ENCODE measurements at regions of chr11 and their contacts with region 1.

Region 1: GRCh38 chr11:19240420-19241259 is at the start of gene E2F8:
- DNase-seq: peak; percentile 92
- H3K4me3 Mint-ChIP-seq: peak within 1 kb of the TSS; percentile 96
- H3K27ac Mint-ChIP-seq: peak within 1 kb of the TSS; percentile 89
- H3K4me1 Mint-ChIP-seq: peaks cover 46% of the 10 kb centered on the region
- H3K27me3 Mint-ChIP-seq: peaks cover 15% of the 10 kb centered on the region
- total RNA-seq, gene E2F8: 25.6 and 28.2 TPM in 2 replicates

Region 2: DNA sequence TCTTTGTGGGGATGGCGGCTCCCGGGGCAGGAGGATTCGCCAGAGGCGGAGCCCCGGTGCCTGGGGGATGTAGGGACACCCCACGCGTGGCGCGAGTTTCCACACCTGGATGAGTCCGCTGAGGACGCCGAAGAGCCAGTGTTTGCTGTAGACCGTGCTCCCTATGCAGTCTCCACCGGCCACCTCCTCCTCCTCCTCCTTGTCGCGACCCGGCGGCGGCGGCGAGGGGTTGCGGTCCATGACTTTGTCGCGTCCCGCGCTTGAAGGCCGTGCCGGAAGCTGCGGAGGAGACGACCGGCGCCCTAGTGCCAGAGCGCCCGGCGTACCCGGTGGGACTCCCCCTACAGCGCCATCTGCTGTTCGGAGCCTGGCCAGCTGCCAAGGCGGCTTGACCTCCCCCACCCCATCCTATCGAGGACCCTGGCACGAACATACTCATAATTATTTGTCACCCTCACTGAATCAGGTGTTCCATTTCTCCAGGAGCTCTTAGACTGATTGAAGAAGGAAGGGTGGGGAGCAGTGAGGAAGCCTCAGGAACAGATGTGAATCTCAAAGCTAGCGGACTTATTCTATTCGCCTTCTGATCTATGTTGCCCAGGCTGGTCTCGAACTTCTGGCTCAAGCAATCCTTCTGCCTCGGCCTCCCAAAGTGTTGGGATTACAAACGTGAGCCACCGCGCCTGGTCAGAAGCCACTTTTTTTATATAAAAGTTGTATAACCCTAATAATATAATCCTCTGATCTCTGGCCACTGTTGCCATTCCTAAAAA is 1134.7 kb before region 1 on chr11 and contains the start of gene SAAL1:
- intact Hi-C with region 1: loop called (anchors 5 kb)
- DNase-seq: peak; percentile 86
- H3K4me3 Mint-ChIP-seq: peak within 1 kb of the TSS; percentile 94
- H3K27ac Mint-ChIP-seq: peak within 1 kb of the TSS; percentile 88
- H3K4me1 Mint-ChIP-seq: peaks cover 33% of the 10 kb centered on the region
- H3K27me3 Mint-ChIP-seq: peaks cover 3% of the 10 kb centered on the region
- total RNA-seq, gene SAAL1: 42.5 and 42.9 TPM in 2 replicates

Region 3: GRCh38 chr11:18395735-18396504 is 844.7 kb before region 1 on chr11:
- intact Hi-C with region 1: loop called (anchors 10 kb)
- DNase-seq: peak; percentile 96
- H3K4me3 Mint-ChIP-seq: peak overlapping the region; percentile 99
- H3K27ac Mint-ChIP-seq: peak overlapping the region; percentile 98
- H3K4me1 Mint-ChIP-seq: peaks cover 67% of the 10 kb centered on the region
- H3K27me3 Mint-ChIP-seq: no peaks in the 10 kb centered on the region

Region 4: DNA sequence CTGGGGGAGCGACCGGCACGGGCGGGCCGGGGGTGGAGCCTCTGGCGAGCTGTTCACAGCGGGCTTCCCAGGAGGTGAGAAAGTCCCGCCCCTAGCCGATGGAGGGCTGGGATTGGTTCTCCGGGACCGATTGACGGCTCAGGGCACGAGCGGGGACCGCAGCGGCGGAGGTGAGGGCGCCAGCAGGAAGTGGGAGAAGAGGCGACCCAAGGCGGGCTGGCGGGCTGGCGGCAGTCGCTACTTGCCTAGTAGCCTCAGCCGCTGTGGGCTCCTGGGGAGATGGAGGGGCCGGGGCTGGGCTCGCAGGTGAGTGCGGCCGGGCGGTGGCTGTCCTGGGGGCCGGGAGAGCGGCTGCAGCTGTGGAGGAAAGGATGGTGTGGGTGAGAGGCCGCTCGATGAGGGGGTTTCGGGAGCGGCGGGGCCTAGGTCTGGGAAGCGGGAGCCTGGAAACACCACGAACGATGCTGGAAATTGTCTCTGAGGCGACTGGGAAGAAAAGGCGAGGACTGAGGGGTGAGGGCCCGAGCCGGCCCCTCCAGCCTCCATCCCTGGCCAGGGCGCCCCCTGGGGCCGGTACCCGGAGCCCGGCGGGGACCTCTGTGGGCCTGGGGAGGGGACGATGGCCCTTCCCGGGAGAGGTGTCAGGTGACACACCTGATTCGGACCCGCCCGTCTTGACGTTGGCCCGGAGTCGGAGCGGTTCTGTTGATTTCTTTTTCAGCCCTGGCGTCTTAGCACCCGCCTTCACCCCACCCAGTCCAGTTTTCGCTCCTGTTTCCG is 123.5 kb before region 1 on chr11 and contains the start of gene ZDHHC13:
- intact Hi-C with region 1: loop called (anchors 1 kb)
- DNase-seq: peak; percentile 94
- H3K4me3 Mint-ChIP-seq: peak within 1 kb of the TSS; percentile 93
- H3K27ac Mint-ChIP-seq: peak within 1 kb of the TSS; percentile 84
- H3K4me1 Mint-ChIP-seq: peaks cover 54% of the 10 kb centered on the region
- H3K27me3 Mint-ChIP-seq: peaks cover 12% of the 10 kb centered on the region
- total RNA-seq, gene ZDHHC13: 25.0 and 28.9 TPM in 2 replicates

Region 5: DNA sequence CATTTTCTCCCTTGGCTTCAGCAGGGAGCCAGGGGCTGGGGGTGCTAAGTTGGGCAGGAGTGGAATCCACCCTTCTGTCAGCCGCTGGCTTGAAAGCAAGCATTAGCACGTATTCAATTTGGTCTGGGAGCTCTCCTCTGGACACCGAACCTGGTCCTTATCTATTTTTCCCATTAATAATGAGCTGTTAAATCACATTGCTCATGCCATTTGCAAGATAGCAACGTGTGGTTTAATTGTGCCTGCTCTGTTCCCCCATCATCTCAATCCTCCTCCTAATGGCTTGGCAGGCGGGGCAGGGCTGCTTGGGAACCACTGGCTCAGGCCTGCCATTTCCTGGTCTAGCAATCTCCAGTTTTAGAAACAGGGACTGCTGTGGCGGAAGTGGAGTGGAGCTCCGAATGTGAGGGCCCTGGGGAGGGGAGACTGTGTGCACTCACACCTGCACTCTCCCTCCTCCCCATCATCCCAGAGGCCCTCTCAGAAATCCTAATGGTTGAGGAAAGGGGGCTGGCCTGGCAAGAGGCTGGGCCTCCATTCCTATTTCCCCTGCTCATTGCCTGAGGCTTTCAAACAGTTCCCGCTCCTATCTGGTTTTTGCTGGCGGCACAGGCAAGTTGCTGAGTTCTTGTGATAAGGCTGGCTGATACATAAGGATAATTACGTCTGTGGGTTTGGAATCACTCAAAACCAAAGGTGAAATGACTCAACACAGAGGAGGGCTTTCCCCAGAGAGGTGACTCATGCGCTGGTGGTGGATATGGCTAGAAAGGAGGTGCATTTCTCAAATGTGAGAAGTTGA is 201.3 kb after region 1 on chr11:
- intact Hi-C with region 1: loop called (anchors 5 kb)
- DNase-seq: peak; percentile 41
- H3K4me3 Mint-ChIP-seq: no peak overlapping the region
- H3K27ac Mint-ChIP-seq: peak overlapping the region; percentile 18
- H3K4me1 Mint-ChIP-seq: peaks cover 24% of the 10 kb centered on the region
- H3K27me3 Mint-ChIP-seq: peaks cover 46% of the 10 kb centered on the region

Region 6: DNA sequence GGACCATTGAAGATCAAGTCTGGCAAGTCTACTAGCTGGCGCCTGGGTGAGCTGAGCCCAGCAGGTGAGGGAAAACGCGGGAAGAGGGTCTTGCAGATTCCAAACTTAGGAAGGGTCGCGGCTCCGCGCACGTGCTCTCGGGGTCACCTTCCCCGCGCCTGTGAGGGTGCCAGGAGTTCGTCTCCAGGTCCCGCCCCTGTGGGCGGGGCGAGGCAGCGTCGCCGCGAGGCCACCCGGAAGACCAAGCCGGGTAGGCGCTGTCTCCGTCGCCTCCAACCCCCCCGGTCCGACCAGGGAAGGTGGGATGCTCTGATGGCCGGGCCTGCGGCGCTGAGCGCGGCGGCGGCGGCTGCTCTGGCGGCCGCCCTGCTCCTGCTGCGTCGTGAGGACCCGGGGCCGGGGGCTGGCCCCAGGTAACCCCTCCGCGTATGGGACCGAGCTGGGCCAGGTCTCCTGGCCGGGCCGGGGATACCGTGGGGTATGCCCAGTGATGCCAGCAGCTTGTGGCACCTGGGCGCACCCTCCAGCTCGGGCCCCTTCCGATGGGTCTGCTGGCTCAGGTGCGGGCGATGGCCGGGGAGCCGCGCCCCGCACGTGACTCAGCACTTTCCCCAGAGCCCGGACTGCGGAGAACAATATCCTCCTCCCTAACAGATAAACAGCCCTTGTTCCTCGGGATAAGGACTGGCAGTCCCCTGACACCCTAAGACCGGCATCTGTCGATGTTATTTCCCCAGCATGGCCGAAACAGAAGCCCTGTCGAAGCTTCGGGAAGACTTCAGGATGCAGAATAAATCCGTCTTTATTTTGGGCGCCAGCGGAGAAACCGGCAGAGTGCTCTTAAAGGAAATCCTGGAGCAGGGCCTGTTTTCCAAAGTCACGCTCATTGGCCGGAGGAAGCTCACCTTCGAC is 1123.1 kb after region 1 on chr11 and contains the start of gene HTATIP2:
- intact Hi-C with region 1: loop called (anchors 2 kb)
- DNase-seq: peak; percentile 67
- H3K4me3 Mint-ChIP-seq: peak within 1 kb of the TSS; percentile 90
- H3K27ac Mint-ChIP-seq: peak within 1 kb of the TSS; percentile 92
- H3K4me1 Mint-ChIP-seq: peaks cover 68% of the 10 kb centered on the region
- H3K27me3 Mint-ChIP-seq: no peaks in the 10 kb centered on the region
- total RNA-seq, gene HTATIP2: 40.8 and 43.9 TPM in 2 replicates

Measured in activated T-helper 1 cell treated with anti-CD3 and anti-CD28 coated beads, Interleukin-12 subunit alpha, Interleukin-12 subunit beta, Interleukin-2, Interleukin-4 antibody, amounts not matched to agents 30 ng/mL and 10 ng/mL and 1 ng/mL, durations not matched to agents 14 hours and 24 hours and 36 hours (primary cell).